ENCODE measurements at regions of chr16 and their contacts with region 1.

Region 1: GRCh38 chr16:12971241-12971640 is 69.8 kb downstream of the SHISA9 start:
- DNase-seq: no peak
- H3K4me3 ChIP-seq: no peak overlapping the region
- H3K27ac ChIP-seq: no peak overlapping the region
- H3K4me1 ChIP-seq: no peaks in the 10 kb centered on the region
- H3K27me3 ChIP-seq: no peaks in the 10 kb centered on the region
- CTCF ChIP-seq: no peak

Region 2: DNA sequence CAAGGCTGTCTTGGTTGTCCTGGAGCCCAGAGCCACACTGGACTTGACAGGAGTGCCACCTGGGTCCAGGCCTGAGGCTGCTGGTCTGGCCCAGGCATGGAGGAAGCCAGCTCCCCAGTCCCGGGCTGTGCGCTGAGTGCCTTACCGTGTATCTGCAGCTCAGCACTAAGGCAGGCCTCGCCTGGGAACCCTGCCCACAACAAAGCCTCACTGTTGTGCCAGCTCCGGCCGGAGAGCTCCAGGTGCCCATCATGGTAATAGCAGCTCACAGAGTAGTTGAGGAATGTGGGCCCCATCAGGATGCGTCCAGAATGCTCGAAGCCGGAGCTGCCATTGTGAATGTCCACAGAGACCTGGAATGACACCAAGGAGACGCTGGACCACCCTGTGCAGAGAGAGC is 1553.8 kb before region 1 on chr16:
- intact Hi-C with region 1: no loop called
- DNase-seq: no peak
- H3K4me3 ChIP-seq: no peak overlapping the region
- H3K27ac ChIP-seq: no peak overlapping the region
- H3K4me1 ChIP-seq: no peaks in the 10 kb centered on the region
- H3K27me3 ChIP-seq: no peaks in the 10 kb centered on the region
- CTCF ChIP-seq: no peak

Region 3: DNA sequence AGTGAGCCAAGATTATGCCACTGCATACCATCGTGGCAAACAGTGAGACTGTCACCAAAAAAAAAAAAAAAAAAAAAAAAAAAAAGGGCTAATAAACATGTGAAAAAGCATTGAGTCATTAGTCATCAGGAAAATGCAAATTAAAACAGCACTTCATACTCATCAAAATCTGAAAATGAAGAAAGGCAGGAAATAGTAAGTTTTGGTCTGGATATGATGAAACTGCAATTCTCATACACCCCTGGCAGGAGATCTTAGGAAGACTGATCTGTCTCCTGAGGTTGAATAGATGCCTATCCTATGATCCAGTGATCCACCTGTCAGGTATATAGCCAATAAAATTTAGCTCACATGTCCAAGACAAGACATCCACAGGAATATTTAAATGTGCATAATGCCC is 380.3 kb before region 1 on chr16:
- intact Hi-C with region 1: loop called (anchors 10 kb)
- DNase-seq: no peak
- H3K4me3 ChIP-seq: no peak overlapping the region
- H3K27ac ChIP-seq: no peak overlapping the region
- H3K4me1 ChIP-seq: no peaks in the 10 kb centered on the region
- H3K27me3 ChIP-seq: no peaks in the 10 kb centered on the region
- CTCF ChIP-seq: no peak

Region 4: GRCh38 chr16:13148836-13149235 is 177.6 kb after region 1 on chr16:
- intact Hi-C with region 1: no loop called
- DNase-seq: no peak
- H3K4me3 ChIP-seq: no peak overlapping the region
- H3K27ac ChIP-seq: no peak overlapping the region
- H3K4me1 ChIP-seq: no peaks in the 10 kb centered on the region
- H3K27me3 ChIP-seq: no peaks in the 10 kb centered on the region
- CTCF ChIP-seq: no peak

Measured in ascending aorta (tissue), 2 donors.